AG04450 (cell line): ENCODE measurements at regions of chr2 and their contacts with region 1.

Region 1: DNA sequence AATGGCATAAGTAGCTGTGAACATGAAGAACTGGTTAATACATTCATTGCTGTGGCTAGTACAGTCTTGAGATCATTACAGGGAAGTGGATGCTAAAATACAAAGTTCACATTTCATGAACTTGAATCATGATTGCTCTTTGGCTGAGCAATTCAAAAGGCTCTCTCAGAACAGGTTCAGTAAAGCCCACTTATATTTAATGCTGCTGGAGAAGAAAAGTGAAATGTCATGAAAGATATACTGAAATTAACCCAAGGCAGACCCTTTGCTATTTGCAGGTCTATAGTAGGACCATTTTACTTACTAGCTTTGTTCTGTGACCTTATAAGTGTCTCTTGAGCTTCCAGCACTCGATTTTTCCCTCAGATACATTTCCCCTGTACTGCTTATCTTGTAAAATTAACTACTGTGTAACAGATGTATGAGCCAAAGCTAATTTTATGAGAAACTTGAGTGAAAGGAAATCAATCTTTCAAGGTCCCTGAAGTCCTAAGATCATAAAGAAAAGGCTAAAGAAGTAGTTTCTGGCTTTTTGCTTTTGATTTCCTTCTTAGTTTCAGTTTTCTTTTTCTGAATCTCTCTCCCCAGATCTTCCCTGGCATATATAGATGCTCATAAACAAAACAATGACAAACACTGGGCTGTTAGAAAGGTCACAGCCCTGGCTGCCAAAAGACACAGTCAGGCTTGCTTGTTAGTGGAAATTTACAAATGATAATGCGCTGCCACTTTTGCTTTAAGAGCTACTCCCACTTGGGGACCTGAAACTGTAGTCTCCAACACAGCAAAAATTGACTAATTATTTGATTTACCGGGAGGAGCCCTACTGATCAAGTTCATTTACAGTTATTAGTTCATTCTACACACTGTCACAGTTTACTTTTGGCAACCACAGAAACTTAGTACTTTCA is 132.7 kb upstream of the XPO1 start:
- DNase-seq: no peak
- H3K4me3 ChIP-seq: peak overlapping the region; percentile 38
- H3K27ac ChIP-seq: no peak overlapping the region
- H3K27me3 ChIP-seq: peaks cover 4% of the 10 kb centered on the region
- CTCF ChIP-seq: no peak

Region 2: GRCh38 chr2:60936757-60937156 is 734.1 kb before region 1 on chr2:
- CTCF ChIA-PET with region 1: no interaction called
- POLR2A ChIA-PET with region 1: no interaction called
- DNase-seq: no peak
- H3K4me3 ChIP-seq: no peak overlapping the region
- H3K27ac ChIP-seq: no peak overlapping the region
- H3K27me3 ChIP-seq: no peaks in the 10 kb centered on the region
- CTCF ChIP-seq: no peak

Region 3: GRCh38 chr2:61658841-61659780 is 11.7 kb before region 1 on chr2:
- CTCF ChIA-PET with region 1: interaction called, 10 read pairs
- POLR2A ChIA-PET with region 1: no interaction called
- DNase-seq: no peak
- H3K4me3 ChIP-seq: no peak overlapping the region
- H3K27ac ChIP-seq: no peak overlapping the region
- H3K27me3 ChIP-seq: no peaks in the 10 kb centered on the region
- CTCF ChIP-seq: peak; percentile 68

Region 4: DNA sequence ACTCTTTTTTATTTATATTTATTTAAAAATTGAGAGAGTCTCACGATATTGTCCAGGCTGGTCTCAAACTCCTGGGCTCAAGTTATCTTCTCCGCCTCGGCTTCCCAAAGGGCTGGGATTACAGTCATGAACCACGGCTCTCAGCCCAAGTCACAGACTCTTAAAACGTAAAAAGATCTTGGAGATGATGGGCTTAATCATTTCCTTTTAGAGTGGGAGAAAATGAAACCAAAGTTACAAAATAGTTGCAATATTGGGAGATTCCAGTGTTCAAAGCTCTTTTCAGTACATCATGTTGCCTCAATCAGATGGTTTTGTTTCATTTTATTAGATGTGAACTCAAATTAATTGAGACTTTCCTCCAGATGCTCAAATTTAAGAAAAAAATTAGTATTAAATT is 18.7 kb after region 1 on chr2:
- CTCF ChIA-PET with region 1: no interaction called
- POLR2A ChIA-PET with region 1: no interaction called
- DNase-seq: no peak
- H3K4me3 ChIP-seq: no peak overlapping the region
- H3K27ac ChIP-seq: no peak overlapping the region
- H3K27me3 ChIP-seq: no peaks in the 10 kb centered on the region
- CTCF ChIP-seq: no peak